Testis (tissue), 5 donors: ENCODE measurements at regions of chr11 and their contacts with region 1.

Region 1: GRCh38 chr11:12673924-12674570 is at the start of gene TEAD1:
- DNase-seq: peak; percentile 97
- H3K4me3 ChIP-seq: peak within 1 kb of the TSS; percentile 74 to 86
- H3K27ac ChIP-seq: peak within 1 kb of the TSS; percentile 88 to 97
- H3K4me1 ChIP-seq: no peaks in the 10 kb centered on the region
- H3K27me3 ChIP-seq: no peaks in the 10 kb centered on the region
- CTCF ChIP-seq: no peak
- POLR2A ChIP-seq: no peak
- total RNA-seq, gene TEAD1: 63.5 to 78.1 TPM

Region 2: DNA sequence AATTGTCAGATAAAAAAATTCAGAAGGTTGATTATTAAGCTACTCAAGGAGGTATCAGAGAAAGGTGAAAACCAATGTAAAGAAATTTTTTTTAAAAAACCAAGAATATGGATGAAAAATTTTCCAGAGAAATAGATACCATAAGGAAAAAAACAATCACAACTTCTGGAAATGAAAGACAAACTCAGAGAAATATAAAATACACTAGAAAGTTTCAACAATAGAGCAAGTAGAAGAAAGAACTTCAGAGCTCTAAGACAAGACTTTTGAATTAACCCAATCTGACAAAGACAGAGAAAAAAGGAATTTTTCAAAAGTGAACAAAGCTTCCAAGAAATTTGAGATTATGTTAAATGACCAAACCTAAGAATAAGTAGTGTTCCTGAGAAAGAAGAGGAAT is 62.7 kb before region 1 on chr11:
- intact Hi-C with region 1: no loop called
- DNase-seq: no peak
- H3K4me3 ChIP-seq: no peak overlapping the region
- H3K27ac ChIP-seq: no peak overlapping the region
- H3K4me1 ChIP-seq: no peaks in the 10 kb centered on the region
- H3K27me3 ChIP-seq: no peaks in the 10 kb centered on the region
- CTCF ChIP-seq: no peak
- POLR2A ChIP-seq: no peak

Region 3: GRCh38 chr11:12625438-12626071 is 48.5 kb before region 1 on chr11:
- intact Hi-C with region 1: no loop called
- DNase-seq: no peak
- H3K4me3 ChIP-seq: no peak overlapping the region
- H3K27ac ChIP-seq: no peak overlapping the region
- H3K4me1 ChIP-seq: no peaks in the 10 kb centered on the region
- H3K27me3 ChIP-seq: no peaks in the 10 kb centered on the region
- CTCF ChIP-seq: no peak
- POLR2A ChIP-seq: no peak

Region 4: DNA sequence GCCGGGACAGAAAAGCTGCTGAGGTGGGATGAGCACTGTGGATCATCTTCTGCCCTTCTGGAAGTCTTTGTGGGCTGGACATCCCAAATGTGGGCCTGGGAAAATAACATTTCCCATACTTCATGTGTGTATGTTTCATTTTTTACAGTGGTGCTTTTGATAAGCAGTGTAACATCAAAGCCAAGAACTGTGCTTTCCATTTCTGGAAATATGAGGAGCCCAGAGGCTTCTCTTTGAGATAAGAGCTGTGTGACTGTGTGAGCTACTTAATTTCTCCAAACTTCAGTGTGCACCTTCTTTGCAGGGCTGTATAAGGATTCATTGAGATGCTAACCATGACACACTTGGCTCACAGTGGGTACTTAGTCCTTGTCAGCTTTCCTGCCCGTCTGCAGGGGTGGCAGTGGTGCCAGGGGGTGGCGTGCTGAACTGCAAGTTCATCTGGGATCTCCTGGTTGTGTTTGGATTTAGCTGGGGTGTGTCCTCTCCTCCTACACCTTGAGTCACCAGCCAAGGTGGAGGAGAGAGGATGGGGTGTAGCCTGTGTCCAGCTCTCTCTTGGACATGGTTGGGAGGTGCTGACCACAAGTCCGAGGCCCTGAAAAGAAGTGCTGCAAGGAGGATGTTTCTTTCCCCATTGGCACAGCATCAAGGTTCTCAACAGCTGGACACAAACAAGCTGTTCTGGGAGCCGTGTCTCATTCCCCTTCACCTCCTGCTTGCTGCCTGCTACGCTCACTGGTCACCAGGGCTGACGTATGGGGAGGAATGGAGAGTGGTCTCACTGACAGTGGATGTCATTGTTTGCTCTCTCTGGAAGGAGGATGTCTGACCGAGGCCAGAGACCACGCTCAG is 139.6 kb after region 1 on chr11:
- intact Hi-C with region 1: loop called (anchors 10 kb)
- DNase-seq: peak; percentile 63
- H3K4me3 ChIP-seq: no peak overlapping the region
- H3K27ac ChIP-seq: peak overlapping the region; percentile 63 to 67
- H3K4me1 ChIP-seq: peaks cover 32% of the 10 kb centered on the region
- H3K27me3 ChIP-seq: no peaks in the 10 kb centered on the region
- CTCF ChIP-seq: no peak
- POLR2A ChIP-seq: no peak

Region 5: DNA sequence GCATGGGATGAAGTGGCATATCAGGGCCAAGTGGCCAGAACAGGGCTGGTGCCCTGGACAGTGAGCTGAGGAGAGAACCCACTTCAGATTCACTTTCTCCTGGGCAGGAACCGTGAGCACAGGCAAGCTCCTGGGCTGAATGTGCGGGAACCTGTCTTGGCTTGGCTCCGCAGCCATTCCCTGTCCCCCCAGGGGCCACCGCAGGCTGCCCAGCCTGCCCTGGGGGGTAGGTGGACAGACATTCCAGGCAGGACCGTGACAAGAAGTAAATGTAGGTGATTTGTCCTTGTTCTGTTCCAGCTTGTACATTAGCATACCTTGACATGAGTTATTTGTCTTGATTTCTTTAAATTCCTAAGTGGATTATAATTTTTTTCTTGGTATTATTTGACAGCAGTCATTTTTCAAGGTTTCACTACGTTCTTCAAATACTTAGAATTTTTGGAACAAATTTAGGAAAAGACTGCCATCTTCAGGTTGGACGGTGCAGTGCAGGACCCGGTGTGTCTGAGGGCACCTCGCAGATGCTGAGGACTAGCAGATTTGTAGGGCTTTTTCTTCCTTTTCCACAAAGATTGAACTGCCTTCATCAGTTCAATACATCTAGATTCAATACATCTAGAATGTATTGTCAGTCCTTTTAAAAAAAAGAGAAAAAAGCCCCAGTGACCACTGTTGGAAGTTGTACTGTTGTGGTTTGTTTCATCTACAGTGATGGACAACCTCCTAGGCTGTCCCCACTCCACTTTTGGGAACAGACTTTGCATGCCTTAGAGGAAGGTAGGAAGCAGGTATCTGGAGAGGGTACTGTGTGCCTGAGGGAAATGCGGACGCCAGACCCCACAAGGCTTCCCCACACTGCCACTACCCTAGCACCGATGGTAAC is 220.0 kb after region 1 on chr11:
- intact Hi-C with region 1: loop called (anchors 10 kb)
- DNase-seq: peak; percentile 71
- H3K4me3 ChIP-seq: no peak overlapping the region
- H3K27ac ChIP-seq: no peak overlapping the region
- H3K4me1 ChIP-seq: peaks cover 10% of the 10 kb centered on the region
- H3K27me3 ChIP-seq: no peaks in the 10 kb centered on the region
- CTCF ChIP-seq: peak; percentile 83 to 91 (median 90)
- POLR2A ChIP-seq: no peak